ENCODE measurements at regions of chr5 and their contacts with region 1.

Region 1: DNA sequence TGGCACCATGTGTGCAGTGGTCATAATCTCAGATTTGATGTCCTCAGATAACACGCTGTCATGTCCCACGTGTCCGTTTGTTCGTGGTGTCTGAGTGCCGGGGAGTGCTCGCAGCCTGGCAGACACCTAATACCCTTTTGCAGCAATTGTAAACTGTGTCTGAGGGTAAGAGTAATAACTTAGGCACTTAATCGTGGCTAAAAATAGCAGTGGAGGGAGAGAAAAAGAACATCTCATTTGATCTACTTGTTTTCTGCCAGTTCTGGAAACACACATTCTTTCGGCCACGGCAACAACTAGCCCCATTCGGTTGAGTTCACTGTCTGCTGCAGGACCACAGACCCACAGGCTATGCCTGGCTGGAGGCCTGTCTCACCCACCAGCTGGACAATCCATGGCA is 16.5 kb downstream of the ADCY2 start:
- DNase-seq: peak; percentile 84 to 93
- ATAC-seq: peak; percentile 89 to 90
- H3K4me3 ChIP-seq: peak overlapping the region; percentile 29 to 49 (median 34)
- H3K27ac ChIP-seq: peak overlapping the region; percentile 88 to 94 (median 92)
- H3K4me1 ChIP-seq: peaks cover 53 to 62% of the 10 kb centered on the region in 2 donors
- H3K27me3 ChIP-seq: no peaks in the 10 kb centered on the region
- CTCF ChIP-seq: no peak
- POLR2A ChIP-seq: no peak

Region 2: DNA sequence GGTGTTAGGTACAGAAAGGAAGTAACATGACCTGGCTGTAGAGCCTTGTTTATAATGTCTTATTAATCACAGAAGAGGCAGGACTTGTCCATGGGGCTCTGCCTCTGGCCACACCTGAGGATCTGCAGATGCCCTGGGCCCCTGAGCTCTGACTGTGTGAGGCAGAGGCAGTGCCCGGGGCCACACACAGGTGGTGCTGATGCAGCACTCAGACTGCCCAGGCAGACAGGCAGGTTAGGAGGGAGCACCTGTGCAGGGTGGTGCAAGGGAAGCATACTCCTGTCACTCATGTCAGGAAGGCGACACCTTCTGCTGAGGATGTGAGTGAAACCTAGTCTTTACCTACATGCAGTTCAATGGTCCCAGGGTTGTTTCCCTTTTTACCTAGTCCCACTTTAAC is 349.9 kb after region 1 on chr5:
- in situ Hi-C with region 1: no loop called
- intact Hi-C with region 1: loop called (anchors 5 kb)
- DNase-seq: peak in 1 of 2 donors; percentile 53
- ATAC-seq: no peak
- H3K4me3 ChIP-seq: no peak overlapping the region
- H3K27ac ChIP-seq: peak overlapping the region; percentile 78 to 89 (median 84)
- H3K4me1 ChIP-seq: peaks cover 14 to 50% of the 10 kb centered on the region in 2 donors
- H3K27me3 ChIP-seq: no peaks in the 10 kb centered on the region
- CTCF ChIP-seq: peak in 2 of 5 experiments; percentile 26 to 31
- POLR2A ChIP-seq: no peak

Measured in gastrocnemius medialis (tissue), 4 donors.